Activated CD4-positive, alpha-beta memory T cell treated with anti-CD3 and anti-CD28 coated beads, Interleukin-2, amount 10 ng/mL, durations not matched to agents 7 days and 5 days (primary cell): ENCODE measurements at regions of chr12 and their contacts with region 1.

Region 1: DNA sequence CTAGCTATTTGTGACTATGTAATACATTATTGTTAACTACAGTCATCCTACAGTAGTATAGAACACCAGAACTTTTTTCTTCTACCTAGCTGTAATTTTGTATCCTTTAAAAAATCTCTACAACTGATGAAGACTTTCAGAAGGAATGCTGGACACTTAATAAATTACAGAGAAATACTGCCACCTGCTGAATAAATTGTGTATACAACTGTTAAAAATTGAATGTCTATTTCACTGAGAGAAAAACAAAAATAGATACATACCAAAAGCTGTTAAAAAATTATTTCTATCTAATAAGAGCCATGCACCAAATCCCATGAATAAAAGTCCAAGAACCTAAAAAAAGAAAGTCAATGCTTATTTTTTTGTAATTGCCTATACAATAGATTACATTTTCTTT is 6.6 kb downstream of the TSPAN19 start:
- DNase-seq: no peak
- H3K4me3 Mint-ChIP-seq: no peak overlapping the region
- H3K27ac Mint-ChIP-seq: no peak overlapping the region
- H3K4me1 Mint-ChIP-seq: no peaks in the 10 kb centered on the region
- H3K27me3 Mint-ChIP-seq: no peaks in the 10 kb centered on the region

Region 2: GRCh38 chr12:84874125-84874824 is 155.2 kb before region 1 on chr12:
- CTCF ChIA-PET with region 1: interaction called, 47 read pairs
- POLR2A ChIA-PET with region 1: no interaction called
- DNase-seq: no peak
- H3K4me3 Mint-ChIP-seq: no peak overlapping the region
- H3K27ac Mint-ChIP-seq: no peak overlapping the region
- H3K4me1 Mint-ChIP-seq: no peaks in the 10 kb centered on the region
- H3K27me3 Mint-ChIP-seq: peaks cover 2% of the 10 kb centered on the region

Region 3: GRCh38 chr12:84924981-84925380 is 104.5 kb before region 1 on chr12:
- CTCF ChIA-PET with region 1: no interaction called
- POLR2A ChIA-PET with region 1: no interaction called
- DNase-seq: no peak
- H3K4me3 Mint-ChIP-seq: no peak overlapping the region
- H3K27ac Mint-ChIP-seq: no peak overlapping the region
- H3K4me1 Mint-ChIP-seq: no peaks in the 10 kb centered on the region
- H3K27me3 Mint-ChIP-seq: no peaks in the 10 kb centered on the region

Region 4: GRCh38 chr12:84955298-84955697 is 74.2 kb before region 1 on chr12:
- CTCF ChIA-PET with region 1: no interaction called
- POLR2A ChIA-PET with region 1: no interaction called
- DNase-seq: no peak
- H3K4me3 Mint-ChIP-seq: no peak overlapping the region
- H3K27ac Mint-ChIP-seq: no peak overlapping the region
- H3K4me1 Mint-ChIP-seq: no peaks in the 10 kb centered on the region
- H3K27me3 Mint-ChIP-seq: no peaks in the 10 kb centered on the region